A549 (cell line): ENCODE measurements at regions of chr6 and their contacts with region 1.

Region 1: DNA sequence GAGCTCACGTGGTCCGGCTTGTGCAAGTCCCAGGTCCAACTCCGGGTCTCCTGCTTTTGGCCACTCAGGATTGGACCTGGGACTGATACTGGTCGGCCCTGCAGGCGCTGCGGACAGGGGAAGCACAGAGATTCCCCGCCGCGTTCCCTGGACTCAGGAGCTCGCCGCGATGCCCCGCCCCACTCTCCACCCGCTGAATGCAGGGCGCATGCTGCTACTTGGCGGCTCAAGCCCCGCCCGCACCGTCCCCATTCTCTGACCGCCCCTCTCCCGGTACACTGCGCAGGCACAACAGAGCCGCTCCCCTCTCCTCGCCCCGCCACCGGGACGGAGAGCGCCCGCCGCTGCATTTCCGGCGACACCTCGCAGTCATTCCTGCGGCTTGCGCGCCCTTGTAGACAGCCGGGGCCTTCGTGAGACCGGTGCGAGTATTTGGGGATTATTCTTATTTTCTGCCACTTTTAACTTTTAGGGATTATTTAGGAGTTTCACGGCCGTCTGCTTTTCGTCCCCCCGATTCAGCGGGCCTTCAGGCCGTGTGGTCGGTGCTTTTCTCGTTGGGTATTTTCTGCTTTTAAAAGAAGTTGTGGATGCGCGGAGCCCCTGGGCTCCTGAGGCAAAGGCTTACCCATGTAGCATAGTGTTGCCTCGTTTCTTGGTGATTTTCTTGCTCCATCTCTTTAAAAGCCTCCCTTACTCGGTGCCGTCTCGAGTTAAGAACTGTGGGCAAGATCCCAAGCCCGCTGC is at the start of gene TMEM14C:
- DNase-seq: peak; percentile 91 to 97
- ATAC-seq: peak; percentile 99
- H3K4me3 ChIP-seq: peak within 1 kb of the TSS; percentile 68
- H3K27ac ChIP-seq: peak within 1 kb of the TSS; percentile 95
- H3K4me1 ChIP-seq: peaks cover 17% of the 10 kb centered on the region
- CTCF ChIP-seq: no peak
- EP300 ChIP-seq: no peak
- POLR2A ChIP-seq: peak; percentile 67
- RAD21 ChIP-seq: no peak
- polyA plus RNA-seq, gene TMEM14C: 173 and 230 TPM in 2 replicates

Region 2: DNA sequence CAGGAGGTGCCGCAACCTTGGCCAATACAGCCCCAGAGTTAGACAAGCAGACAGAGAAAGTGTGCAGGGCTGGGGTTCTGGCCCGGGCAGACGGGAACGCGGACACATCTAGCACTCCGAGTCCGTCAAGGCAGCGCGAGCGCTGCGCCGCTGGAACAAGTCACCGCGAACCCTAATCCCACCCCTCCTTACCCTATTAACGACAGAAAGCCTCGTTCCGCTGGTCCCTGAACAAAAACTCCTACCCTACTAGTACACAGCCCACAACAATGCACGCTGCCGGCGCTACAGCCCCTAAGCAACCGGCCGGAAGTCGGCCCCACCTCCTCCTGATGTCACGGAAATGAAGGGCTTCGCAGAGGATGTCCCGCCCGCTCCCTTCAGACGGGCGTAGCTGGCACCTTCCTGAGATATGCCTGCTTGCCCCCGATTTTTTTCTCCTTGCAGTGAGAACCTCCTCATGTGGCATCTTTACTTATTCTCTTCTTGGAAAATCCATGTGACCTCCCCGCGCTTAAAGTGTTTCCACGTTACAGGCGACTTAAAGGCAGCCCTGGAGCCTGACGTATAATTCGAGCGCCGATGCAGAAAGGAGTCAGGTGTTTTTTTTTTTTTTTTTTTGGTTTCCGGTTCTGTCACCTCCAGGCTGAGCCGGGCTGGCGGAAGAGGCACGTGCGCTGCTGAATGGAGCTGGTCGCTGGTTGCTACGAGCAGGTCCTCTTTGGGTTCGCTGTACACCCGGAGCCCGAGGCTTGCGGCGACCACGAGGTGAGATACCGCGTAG is 28.5 kb before region 1 on chr6 and contains the starts of genes C6orf52 and PAK1IP1:
- CTCF ChIA-PET with region 1: interaction called, 4 read pairs
- POLR2A ChIA-PET with region 1: interaction called, 31 read pairs
- DNase-seq: peak; percentile 88 to 91
- ATAC-seq: peak; percentile 99 to 100
- H3K4me3 ChIP-seq: peak within 1 kb of the TSS; percentile 69
- H3K27ac ChIP-seq: peak within 1 kb of the TSS; percentile 86 to 95
- H3K4me1 ChIP-seq: peaks cover 16% of the 10 kb centered on the region
- CTCF ChIP-seq: no peak
- EP300 ChIP-seq: no peak
- POLR2A ChIP-seq: peak; percentile 89
- RAD21 ChIP-seq: 0 out of 5 replicates have a peak, but pooled peaks of 1 of the 2 experiments have one; percentile 11
- polyA plus RNA-seq, gene C6orf52: 2.2 and 3.2 TPM in 2 replicates
- polyA plus RNA-seq, gene PAK1IP1: 26.8 and 33.4 TPM in 2 replicates

Region 3: DNA sequence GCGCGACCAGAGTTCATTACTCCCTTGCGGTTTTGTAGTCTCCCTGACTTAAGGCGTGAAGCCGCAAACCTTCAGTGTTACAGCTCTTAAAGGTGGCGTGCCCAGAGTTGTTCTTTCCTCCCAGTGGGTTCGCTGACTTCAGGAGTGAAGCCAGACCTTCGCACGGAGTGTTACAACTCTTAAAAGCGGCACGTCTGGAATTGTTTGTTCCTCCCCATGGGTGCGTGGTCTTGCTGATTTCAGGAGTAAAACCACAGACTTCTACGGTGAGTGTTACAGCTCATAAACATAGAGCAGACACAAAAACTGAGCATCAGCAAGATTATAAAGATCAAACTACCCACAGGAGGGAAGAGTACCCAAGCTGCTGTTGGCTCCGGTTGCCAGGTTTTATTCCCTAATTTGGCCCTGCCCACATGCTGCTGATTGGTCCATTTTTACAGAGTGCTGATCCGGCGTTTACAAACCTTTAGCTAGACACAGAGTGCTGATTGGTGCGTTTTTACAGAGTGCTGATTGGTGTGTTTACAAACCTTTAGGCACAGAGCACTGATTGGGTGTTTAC is 10.2 kb after region 1 on chr6:
- CTCF ChIA-PET with region 1: interaction called, 5 read pairs
- POLR2A ChIA-PET with region 1: interaction called, 16 read pairs
- DNase-seq: no peak
- ATAC-seq: peak in 1 of 2 experiments; percentile 26; a peak in 3 of 6 replicates
- H3K4me3 ChIP-seq: no peak overlapping the region
- H3K27ac ChIP-seq: peak overlapping the region; percentile 77 to 90; a peak in 5 of 6 replicates
- H3K4me1 ChIP-seq: peaks cover 26% of the 10 kb centered on the region
- CTCF ChIP-seq: no peak
- EP300 ChIP-seq: no peak
- POLR2A ChIP-seq: no peak
- RAD21 ChIP-seq: no peak

Region 4: GRCh38 chr6:10747251-10747972 is 24.4 kb after region 1 on chr6 and contains the start of gene TMEM14B:
- CTCF ChIA-PET with region 1: interaction called, 4 read pairs
- POLR2A ChIA-PET with region 1: interaction called, 11 read pairs
- DNase-seq: peak; percentile 81 to 94
- ATAC-seq: peak; percentile 95 to 98
- H3K4me3 ChIP-seq: peak within 1 kb of the TSS; percentile 95
- H3K27ac ChIP-seq: peak within 1 kb of the TSS; percentile 90 to 96
- H3K4me1 ChIP-seq: peaks cover 20% of the 10 kb centered on the region
- CTCF ChIP-seq: no peak
- EP300 ChIP-seq: no peak
- POLR2A ChIP-seq: peak; percentile 88
- RAD21 ChIP-seq: peak in 1 of 2 experiments; percentile 24; a peak in 1 of 5 replicates
- polyA plus RNA-seq, gene TMEM14B: 113 and 177 TPM in 2 replicates